H1 (cell line): ENCODE measurements at regions of chr10 and their contacts with region 1.

Region 1: GRCh38 chr10:122877264-122877663 is 2.1 kb downstream of the FAM24B start:
- DNase-seq: no peak
- H3K4me3 ChIP-seq: peak overlapping the region in 1 of 4 experiments; percentile 41; a peak in 1 of 8 replicates
- H3K27ac ChIP-seq: peak overlapping the region; percentile 91
- H3K4me1 ChIP-seq: peaks cover 5 to 35% (median 18%) of the 10 kb centered on the region in 4 experiments
- H3K27me3 ChIP-seq: peaks cover 0 to 3% (median 0%) of the 10 kb centered on the region in 4 experiments; a peak in 3 of 7 replicates
- CTCF ChIP-seq: no peak
- EP300 ChIP-seq: no peak
- POLR2A ChIP-seq: no peak
- RAD21 ChIP-seq: no peak

Region 2: DNA sequence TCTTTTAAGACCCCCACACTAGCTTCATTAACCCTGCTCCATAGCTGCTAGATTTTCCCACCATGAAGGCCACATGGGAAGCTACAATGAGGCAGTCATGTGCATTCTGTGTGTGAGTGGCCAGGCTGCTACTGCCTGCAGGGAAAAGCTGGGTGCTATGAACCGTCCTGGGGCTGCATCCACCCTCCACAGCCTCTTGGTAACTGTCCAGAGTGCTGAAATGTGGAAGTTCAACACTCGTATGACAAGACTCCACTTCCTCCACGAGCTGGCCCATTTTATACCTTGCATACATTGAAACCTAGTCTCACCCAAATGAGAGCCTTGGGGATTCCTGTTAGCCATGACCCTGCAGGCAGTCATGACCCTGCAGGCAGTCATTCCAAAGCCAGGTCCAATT is 91.0 kb before region 1 on chr10:
- CTCF ChIA-PET with region 1: no interaction called
- POLR2A ChIA-PET with region 1: no interaction called
- DNase-seq: peak in 1 of 2 experiments; percentile 52
- H3K4me3 ChIP-seq: no peak overlapping the region
- H3K27ac ChIP-seq: no peak overlapping the region
- H3K4me1 ChIP-seq: no peaks in the 10 kb centered on the region
- H3K27me3 ChIP-seq: 0 out of 7 replicates have a peak, but pooled peaks cover 0 to 4% (median 0%) of the 10 kb centered on the region in 4 experiments
- CTCF ChIP-seq: no peak
- EP300 ChIP-seq: no peak
- POLR2A ChIP-seq: no peak
- RAD21 ChIP-seq: peak; percentile 4 to 23; a peak in 1 of 4 replicates

Region 3: DNA sequence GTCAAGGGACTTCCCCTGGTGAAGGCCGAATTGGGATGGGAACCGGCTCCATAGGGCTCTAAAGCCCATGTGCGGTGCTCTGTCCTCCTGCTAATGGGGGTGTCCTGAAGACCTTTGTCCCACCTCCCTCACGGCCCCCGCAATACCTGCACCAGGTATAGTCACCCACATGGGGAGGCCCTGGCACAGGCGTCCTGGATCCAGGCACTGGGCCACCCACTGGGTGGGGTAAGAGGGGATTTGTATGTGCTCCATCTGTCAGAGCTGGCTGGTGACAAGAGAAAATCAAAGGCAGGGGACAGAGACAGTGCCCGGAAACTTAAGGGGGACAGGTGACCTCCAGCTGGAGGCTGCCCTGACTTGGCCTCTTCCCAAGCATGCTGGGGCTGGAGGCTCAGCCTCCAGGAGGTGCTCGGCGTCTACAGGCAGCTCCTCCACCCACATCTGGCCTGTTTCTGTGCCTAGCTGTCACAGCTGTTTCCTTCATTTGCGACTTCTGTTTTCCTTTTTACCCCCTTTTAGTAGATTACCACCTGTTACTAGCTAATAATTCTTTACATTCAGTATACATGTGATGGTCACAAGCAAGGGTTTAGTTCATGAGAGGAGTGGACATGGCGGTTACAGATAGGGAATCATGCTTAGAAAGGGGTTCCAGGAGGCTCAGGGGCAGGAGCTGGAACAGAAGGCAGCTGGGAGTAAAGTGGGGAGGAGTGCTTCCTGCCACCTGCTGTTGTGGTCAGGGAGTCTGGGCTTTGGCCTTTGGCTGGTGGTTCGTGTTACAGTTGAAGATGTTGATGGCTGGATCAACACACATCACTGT is 29.3 kb before region 1 on chr10:
- CTCF ChIA-PET with region 1: interaction called, 4 read pairs
- POLR2A ChIA-PET with region 1: interaction called, 22 read pairs
- DNase-seq: no peak
- H3K4me3 ChIP-seq: no peak overlapping the region
- H3K27ac ChIP-seq: 0 out of 2 replicates have a peak overlapping the region, but pooled peaks have one; percentile 23
- H3K4me1 ChIP-seq: peaks cover 0 to 11% (median 6%) of the 10 kb centered on the region in 4 experiments; a peak in 4 of 7 replicates
- H3K27me3 ChIP-seq: no peaks in the 10 kb centered on the region
- CTCF ChIP-seq: no peak
- EP300 ChIP-seq: no peak
- POLR2A ChIP-seq: no peak
- RAD21 ChIP-seq: no peak